HepG2 (cell line): ENCODE measurements at regions of chr15 and their contacts with region 1.

Region 1: GRCh38 chr15:79923515-79924395 is 26.9 kb upstream of the MTHFS start:
- DNase-seq: peak; percentile 93
- ATAC-seq: peak; percentile 94
- H3K4me3 ChIP-seq: peak overlapping the region; percentile 92 to 99 (median 94)
- H3K27ac ChIP-seq: peak overlapping the region; percentile 93
- H3K4me1 ChIP-seq: peaks cover 23% of the 10 kb centered on the region
- H3K27me3 ChIP-seq: no peaks in the 10 kb centered on the region; a peak in 1 of 5 replicates
- CTCF ChIP-seq: peak; percentile 10; the same call in 1 of the 2 replicates
- EP300 ChIP-seq: 0 out of 4 replicates have a peak, but pooled peaks of 1 of the 2 experiments have one; percentile 4
- POLR2A ChIP-seq: peak; percentile 92 to 95
- RAD21 ChIP-seq: 0 out of 2 replicates have a peak, but pooled peaks have one; percentile 10

Region 2: DNA sequence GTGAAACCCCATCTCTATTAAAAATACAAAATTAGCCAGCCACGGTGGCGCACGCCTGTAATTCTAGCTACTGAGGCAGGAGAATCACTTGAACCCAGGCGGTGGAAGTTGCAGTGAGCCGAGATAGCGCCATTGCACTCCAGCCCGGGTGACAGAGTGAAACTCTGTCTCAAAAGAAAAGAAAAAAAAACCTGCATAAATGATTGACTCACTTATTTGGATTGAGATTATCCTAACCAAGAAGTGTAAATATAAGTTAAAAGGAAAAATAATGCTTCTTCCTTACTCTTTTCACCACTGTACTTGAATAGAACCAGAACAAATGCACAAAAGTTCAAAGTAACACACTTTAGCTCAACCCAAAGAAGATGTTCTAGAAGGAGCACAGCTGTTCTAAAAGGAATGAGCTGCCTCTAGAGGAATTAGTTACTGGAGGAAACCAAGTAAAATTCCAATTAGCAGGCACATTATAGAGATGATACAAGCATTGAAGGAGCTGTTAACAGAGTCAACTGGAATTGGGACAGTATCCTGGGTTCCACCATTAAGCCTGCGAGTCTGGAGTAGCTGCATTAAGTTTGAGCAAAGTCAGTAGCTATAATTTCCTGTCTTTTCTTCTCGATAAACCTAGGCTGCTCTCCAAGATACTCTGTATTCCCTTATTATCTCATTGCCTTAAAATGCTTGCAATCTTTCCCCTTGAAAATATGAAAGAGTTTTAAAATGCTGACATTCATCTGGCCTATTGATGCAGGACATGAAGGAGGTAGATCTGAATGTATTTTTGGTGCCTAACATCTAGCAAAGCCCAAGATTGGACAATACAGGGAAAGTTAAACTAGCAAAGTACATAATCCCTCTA is 36.5 kb before region 1 on chr15:
- CTCF ChIA-PET with region 1: no interaction called
- POLR2A ChIA-PET with region 1: interaction called, 21 read pairs
- in situ Hi-C with region 1: no loop called
- intact Hi-C with region 1: loop called (anchors 5 kb)
- DNase-seq: no peak
- ATAC-seq: no peak
- H3K4me3 ChIP-seq: no peak overlapping the region
- H3K27ac ChIP-seq: peak overlapping the region; percentile 60
- H3K4me1 ChIP-seq: peaks cover 95% of the 10 kb centered on the region
- H3K27me3 ChIP-seq: no peaks in the 10 kb centered on the region
- CTCF ChIP-seq: no peak
- EP300 ChIP-seq: no peak
- POLR2A ChIP-seq: no peak
- RAD21 ChIP-seq: no peak

Region 3: GRCh38 chr15:79896637-79897379 is 26.9 kb before region 1 on chr15 and contains the start of gene MTHFS:
- CTCF ChIA-PET with region 1: no interaction called
- POLR2A ChIA-PET with region 1: interaction called, 40 read pairs
- in situ Hi-C with region 1: no loop called
- intact Hi-C with region 1: loop called (anchors 2 kb)
- DNase-seq: peak; percentile 66
- ATAC-seq: peak; percentile 96
- H3K4me3 ChIP-seq: peak within 1 kb of the TSS; percentile 85 to 88 (median 85)
- H3K27ac ChIP-seq: peak within 1 kb of the TSS; percentile 98
- H3K4me1 ChIP-seq: peaks cover 62% of the 10 kb centered on the region
- H3K27me3 ChIP-seq: no peaks in the 10 kb centered on the region; a peak in 1 of 5 replicates
- CTCF ChIP-seq: peak; percentile 77
- EP300 ChIP-seq: peak in 1 of 2 experiments; percentile 48; a peak in 1 of 4 replicates
- POLR2A ChIP-seq: peak; percentile 96 to 97
- RAD21 ChIP-seq: peak; percentile 80
- total RNA-seq, gene MTHFS: 37.0 and 52.4 TPM in 2 replicates

Region 4: GRCh38 chr15:79948095-79948695 is 24.4 kb after region 1 on chr15:
- CTCF ChIA-PET with region 1: no interaction called
- POLR2A ChIA-PET with region 1: interaction called, 12 read pairs
- in situ Hi-C with region 1: no loop called
- intact Hi-C with region 1: no loop called
- DNase-seq: no peak
- ATAC-seq: peak; percentile 78
- H3K4me3 ChIP-seq: no peak overlapping the region; a peak in 1 of 6 replicates
- H3K27ac ChIP-seq: no peak overlapping the region
- H3K4me1 ChIP-seq: peaks cover 35% of the 10 kb centered on the region
- H3K27me3 ChIP-seq: no peaks in the 10 kb centered on the region
- CTCF ChIP-seq: no peak
- EP300 ChIP-seq: no peak
- POLR2A ChIP-seq: no peak
- RAD21 ChIP-seq: no peak

Region 5: GRCh38 chr15:79978655-79979514 is 55.1 kb after region 1 on chr15:
- CTCF ChIA-PET with region 1: no interaction called
- POLR2A ChIA-PET with region 1: interaction called, 40 read pairs
- in situ Hi-C with region 1: no loop called
- intact Hi-C with region 1: loop called (anchors 5 kb)
- DNase-seq: peak; percentile 87
- ATAC-seq: peak; percentile 94
- H3K4me3 ChIP-seq: peak overlapping the region in 1 of 3 experiments; percentile 39; a peak in 1 of 6 replicates
- H3K27ac ChIP-seq: peak overlapping the region; percentile 87
- H3K4me1 ChIP-seq: peaks cover 71% of the 10 kb centered on the region
- H3K27me3 ChIP-seq: no peaks in the 10 kb centered on the region
- CTCF ChIP-seq: peak; percentile 5; the same call in 1 of the 2 replicates
- EP300 ChIP-seq: peak; percentile 66 to 88
- POLR2A ChIP-seq: no peak
- RAD21 ChIP-seq: peak; percentile 32

Region 6: DNA sequence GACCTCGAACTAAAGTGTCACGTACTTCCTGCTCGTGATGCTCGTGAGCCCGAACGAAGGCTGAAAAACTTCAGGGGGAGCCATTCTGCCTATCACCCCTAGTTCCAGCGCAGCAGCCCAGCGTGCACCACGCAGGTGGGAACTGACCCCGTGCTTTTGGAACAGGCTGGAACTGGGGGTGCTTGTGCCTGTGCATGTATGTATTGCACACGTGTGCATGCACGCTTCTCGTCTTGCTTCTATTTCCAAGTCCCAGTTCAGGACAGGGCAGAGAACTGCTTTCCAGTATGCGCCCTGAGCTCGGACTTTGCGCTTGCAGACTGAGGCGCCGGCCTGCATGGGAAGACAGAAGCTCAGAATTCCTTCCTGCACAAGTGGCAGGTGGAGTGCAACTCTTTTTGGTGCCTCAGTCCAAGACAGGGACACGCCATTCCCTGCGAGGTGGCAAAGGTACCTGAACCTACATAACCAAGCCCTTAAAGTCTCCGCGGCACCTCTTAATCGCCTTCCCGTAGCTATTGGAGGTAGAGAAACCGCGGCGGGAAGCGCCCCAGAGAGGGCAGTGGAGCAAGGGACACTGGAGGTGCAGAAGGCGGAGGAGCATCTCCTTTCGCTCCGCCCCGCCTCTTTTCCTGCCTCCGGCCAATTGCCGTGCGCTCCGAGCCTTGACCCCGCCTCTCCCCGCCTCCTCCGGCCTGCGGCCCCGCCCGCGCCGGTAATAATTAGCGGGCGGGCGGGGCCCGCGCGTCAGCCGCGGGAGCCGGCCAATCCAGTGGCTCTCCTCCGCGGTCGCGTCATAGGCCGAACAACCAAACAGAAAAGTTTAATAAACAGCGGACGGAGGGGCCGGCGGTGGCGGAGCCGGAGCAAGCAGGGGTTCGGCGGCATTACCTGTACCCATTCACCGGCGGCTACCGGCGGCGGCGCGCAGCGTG is 135.4 kb after region 1 on chr15 and contains the start of gene ZFAND6:
- CTCF ChIA-PET with region 1: no interaction called
- POLR2A ChIA-PET with region 1: interaction called, 12 read pairs
- in situ Hi-C with region 1: no loop called
- intact Hi-C with region 1: loop called (anchors 1 kb)
- DNase-seq: peak; percentile 89
- ATAC-seq: peak; percentile 93
- H3K4me3 ChIP-seq: peak within 1 kb of the TSS; percentile 69 to 97 (median 77)
- H3K27ac ChIP-seq: peak within 1 kb of the TSS; percentile 94
- H3K4me1 ChIP-seq: peaks cover 37% of the 10 kb centered on the region
- H3K27me3 ChIP-seq: no peaks in the 10 kb centered on the region
- CTCF ChIP-seq: no peak; the same call in none of the 2 replicates
- EP300 ChIP-seq: no peak
- POLR2A ChIP-seq: peak; percentile 83 to 97
- RAD21 ChIP-seq: no peak
- total RNA-seq, gene ZFAND6: 84.2 and 116 TPM in 2 replicates